HAP-1 (cell line): ENCODE measurements at regions of chr4 and their contacts with region 1.

Region 1: DNA sequence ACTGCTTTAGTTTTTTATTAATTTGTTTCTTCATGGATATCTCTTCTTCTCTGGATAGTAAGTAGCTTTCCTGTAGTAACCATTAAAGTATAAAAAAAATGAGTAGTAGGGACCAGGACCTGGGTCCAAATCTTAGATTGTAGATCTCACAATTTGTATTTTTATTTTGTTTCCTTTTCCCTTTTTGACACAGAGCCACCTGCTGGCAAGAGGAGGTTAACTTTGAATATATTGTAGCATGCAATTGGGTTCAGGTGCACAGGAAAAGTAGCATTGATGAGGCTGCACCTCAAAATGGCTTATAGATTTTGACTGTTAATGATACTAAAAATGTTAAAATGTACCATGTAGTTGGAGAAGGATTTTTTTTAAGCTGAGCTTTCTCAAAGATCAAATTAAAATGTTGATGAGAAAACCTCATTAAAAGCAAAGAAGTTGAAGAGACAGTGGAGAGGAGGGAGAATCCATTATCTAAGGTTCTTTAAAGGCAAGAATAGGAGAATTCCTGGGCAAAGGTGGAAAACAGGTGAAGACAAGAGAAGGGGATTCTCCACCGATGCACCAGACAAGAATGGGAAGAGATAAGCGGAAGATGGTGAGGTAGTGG is 48.3 kb upstream of the HPGDS start:
- DNase-seq: peak; percentile 17 to 33
- H3K4me3 ChIP-seq: no peak overlapping the region
- H3K4me1 ChIP-seq: no peaks in the 10 kb centered on the region
- H3K27me3 ChIP-seq: peaks cover 5% of the 10 kb centered on the region

Region 2: GRCh38 chr4:94304365-94304971 is 86.4 kb before region 1 on chr4:
- in situ Hi-C with region 1: loop called (anchors 10 kb)
- DNase-seq: peak in 1 of 2 experiments; percentile 45
- H3K4me3 ChIP-seq: no peak overlapping the region
- H3K4me1 ChIP-seq: no peaks in the 10 kb centered on the region
- H3K27me3 ChIP-seq: no peaks in the 10 kb centered on the region

Region 3: DNA sequence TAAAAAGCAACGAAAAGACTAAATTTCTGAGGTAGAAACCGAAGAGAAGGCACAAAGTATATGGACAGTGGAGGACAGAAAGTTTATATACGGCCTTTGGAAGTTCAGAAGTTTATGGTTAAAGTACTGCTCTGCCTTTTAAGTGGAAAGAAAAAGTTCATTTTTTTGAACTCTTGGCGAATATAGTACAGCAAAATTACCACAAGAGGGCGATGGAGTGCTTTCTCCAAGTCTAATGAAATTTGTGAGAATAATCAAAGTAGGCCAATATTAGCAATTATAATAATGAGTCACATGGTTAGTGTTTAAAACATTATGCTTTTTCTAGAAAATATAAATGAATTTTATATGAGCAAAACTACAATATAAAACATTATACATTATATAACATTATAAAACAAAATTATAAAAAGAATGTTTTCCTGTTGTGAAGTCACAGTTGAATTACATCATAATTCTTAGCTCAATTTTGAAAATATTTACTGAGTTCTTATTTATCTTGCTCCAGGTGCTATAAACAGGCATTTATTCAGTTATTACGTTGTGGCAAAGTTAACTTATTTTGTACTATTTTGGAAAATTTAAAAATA is 230.7 kb after region 1 on chr4:
- in situ Hi-C with region 1: no loop called
- DNase-seq: peak; percentile 39 to 60
- H3K4me3 ChIP-seq: no peak overlapping the region
- H3K4me1 ChIP-seq: peaks cover 4% of the 10 kb centered on the region; the same call in 1 of the 2 replicates
- H3K27me3 ChIP-seq: no peaks in the 10 kb centered on the region